KBM-7 (cell line): ENCODE measurements at regions of chr10 and their contacts with region 1.

Region 1: GRCh38 chr10:70903262-70903921 is 15.0 kb upstream of the PCBD1 start:
- DNase-seq: peak; percentile 63

Region 2: GRCh38 chr10:70038923-70039322 is 864.5 kb before region 1 on chr10:
- in situ Hi-C with region 1: no loop called
- DNase-seq: no peak

Region 3: GRCh38 chr10:71085689-71086438 is 182.5 kb after region 1 on chr10:
- in situ Hi-C with region 1: no loop called
- DNase-seq: no peak

Region 4: GRCh38 chr10:71212318-71213126 is 309.1 kb after region 1 on chr10 and contains the start of gene UNC5B:
- in situ Hi-C with region 1: loop called (anchors 25 kb)
- DNase-seq: peak; percentile 90